ENCODE measurements at regions of chr15 and their contacts with region 1.

Region 1: GRCh38 chr15:45166834-45167630 is 20.7 kb downstream of the SHF start:
- DNase-seq: peak; percentile 87
- H3K4me3 Mint-ChIP-seq: peak overlapping the region; percentile 70
- H3K27ac Mint-ChIP-seq: peak overlapping the region; percentile 64
- H3K4me1 Mint-ChIP-seq: peaks cover 15% of the 10 kb centered on the region
- H3K27me3 Mint-ChIP-seq: no peaks in the 10 kb centered on the region

Region 2: GRCh38 chr15:45179221-45179985 is 12.4 kb after region 1 on chr15:
- CTCF ChIA-PET with region 1: interaction called, 19 read pairs
- POLR2A ChIA-PET with region 1: interaction called, 17 read pairs
- DNase-seq: peak; percentile 44
- H3K4me3 Mint-ChIP-seq: no peak overlapping the region
- H3K27ac Mint-ChIP-seq: no peak overlapping the region
- H3K4me1 Mint-ChIP-seq: peaks cover 12% of the 10 kb centered on the region
- H3K27me3 Mint-ChIP-seq: no peaks in the 10 kb centered on the region

Region 3: GRCh38 chr15:45198337-45199135 is 31.5 kb after region 1 on chr15:
- CTCF ChIA-PET with region 1: interaction called, 163 read pairs
- POLR2A ChIA-PET with region 1: interaction called, 47 read pairs
- DNase-seq: peak; percentile 96
- H3K4me3 Mint-ChIP-seq: no peak overlapping the region
- H3K27ac Mint-ChIP-seq: no peak overlapping the region
- H3K4me1 Mint-ChIP-seq: peaks cover 19% of the 10 kb centered on the region
- H3K27me3 Mint-ChIP-seq: peaks cover 2% of the 10 kb centered on the region

Region 4: DNA sequence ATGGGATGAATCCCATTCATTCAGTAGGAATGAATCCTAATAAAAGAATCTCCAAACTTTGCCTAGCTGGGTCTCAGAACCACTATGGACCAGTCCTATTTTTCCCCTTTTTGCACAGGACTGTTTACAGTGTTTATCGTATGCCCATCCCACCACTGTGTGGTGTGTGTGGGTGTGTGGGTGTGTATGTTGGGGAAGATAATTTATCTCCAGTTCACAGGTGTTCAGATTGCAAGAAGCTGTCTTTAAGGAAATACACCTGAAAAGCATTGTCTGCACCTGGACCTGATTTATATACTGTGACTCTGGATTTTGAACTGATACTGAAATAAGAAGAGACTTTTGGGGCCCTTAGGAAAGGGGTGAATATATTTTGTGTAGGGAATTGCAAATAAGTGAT is 45.5 kb after region 1 on chr15:
- CTCF ChIA-PET with region 1: interaction called, 11 read pairs
- POLR2A ChIA-PET with region 1: no interaction called
- DNase-seq: no peak
- H3K4me3 Mint-ChIP-seq: no peak overlapping the region
- H3K27ac Mint-ChIP-seq: no peak overlapping the region
- H3K4me1 Mint-ChIP-seq: no peaks in the 10 kb centered on the region
- H3K27me3 Mint-ChIP-seq: peaks cover 10% of the 10 kb centered on the region